Common myeloid progenitor, CD34-positive (primary cell): ENCODE measurements at regions of chr6 and their contacts with region 1.

Region 1: GRCh38 chr6:125944434-125944816 is 12.1 kb upstream of the HINT3 start:
- DNase-seq: peak; percentile 28 to 56 (median 43)
- H3K4me3 ChIP-seq: peak overlapping the region in 2 of 7 experiments; percentile 50 to 57
- H3K27ac ChIP-seq: peak overlapping the region; percentile 55 to 65
- H3K4me1 ChIP-seq: peaks cover 8 to 48% (median 16%) of the 10 kb centered on the region in 4 experiments
- H3K27me3 ChIP-seq: no peaks in the 10 kb centered on the region

Region 2: GRCh38 chr6:125923987-125924568 is 20.3 kb before region 1 on chr6:
- CTCF ChIA-PET with region 1: interaction called, 11 read pairs
- POLR2A ChIA-PET with region 1: no interaction called
- DNase-seq: peak; percentile 33 to 77 (median 60)
- H3K4me3 ChIP-seq: peak overlapping the region in 2 of 7 experiments; percentile 40
- H3K27ac ChIP-seq: peak overlapping the region in 1 of 2 experiments; percentile 70
- H3K4me1 ChIP-seq: peaks cover 8 to 73% (median 34%) of the 10 kb centered on the region in 4 experiments
- H3K27me3 ChIP-seq: no peaks in the 10 kb centered on the region